Panc1 (cell line): ENCODE measurements at regions of chr10 and their contacts with region 1.

Region 1: DNA sequence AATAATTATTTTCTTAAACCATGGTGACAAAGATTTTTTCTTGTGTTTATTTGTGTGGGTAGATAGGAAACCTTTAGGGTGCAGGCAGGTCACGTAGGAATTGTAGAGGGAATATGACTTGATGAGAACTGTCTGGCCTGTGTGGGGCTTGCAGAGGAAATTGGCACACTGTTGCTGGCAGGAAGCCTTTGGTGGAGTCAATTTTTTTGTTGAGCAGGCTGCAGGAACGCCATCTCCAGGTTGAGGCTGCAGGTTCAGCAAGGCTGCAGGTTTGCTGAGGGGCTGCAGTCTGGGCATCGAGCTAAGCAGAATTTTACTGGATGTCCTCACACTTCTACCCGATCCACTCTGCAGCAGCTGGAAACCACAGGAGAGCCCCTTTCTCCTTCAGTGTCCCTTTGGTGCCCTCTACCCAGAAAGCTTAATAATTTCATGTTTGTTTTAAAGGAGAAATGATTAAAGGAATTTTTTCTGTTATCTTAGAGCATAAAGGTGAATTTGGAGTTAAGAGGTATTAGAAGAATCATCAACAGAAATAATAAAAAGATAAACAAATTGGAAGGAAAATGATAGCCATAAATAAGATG is 37.0 kb downstream of the TBC1D12 start:
- DNase-seq: no peak
- ATAC-seq: peak; percentile 79
- H3K4me3 ChIP-seq: no peak overlapping the region
- H3K27ac ChIP-seq: 0 out of 2 replicates have a peak overlapping the region, but pooled peaks have one; percentile 10
- H3K4me1 ChIP-seq: peaks cover 20% of the 10 kb centered on the region
- H3K27me3 ChIP-seq: no peaks in the 10 kb centered on the region
- CTCF ChIP-seq: peak; percentile 28; the same call in 1 of the 2 replicates

Region 2: GRCh38 chr10:94344522-94345122 is 94.7 kb before region 1 on chr10:
- CTCF ChIA-PET with region 1: interaction called, 3 read pairs
- POLR2A ChIA-PET with region 1: no interaction called
- in situ Hi-C with region 1: no loop called
- intact Hi-C with region 1: loop called (anchors 5 kb)
- DNase-seq: no peak
- ATAC-seq: no peak
- H3K4me3 ChIP-seq: no peak overlapping the region
- H3K27ac ChIP-seq: no peak overlapping the region
- H3K4me1 ChIP-seq: no peaks in the 10 kb centered on the region
- H3K27me3 ChIP-seq: no peaks in the 10 kb centered on the region
- CTCF ChIP-seq: no peak

Region 3: DNA sequence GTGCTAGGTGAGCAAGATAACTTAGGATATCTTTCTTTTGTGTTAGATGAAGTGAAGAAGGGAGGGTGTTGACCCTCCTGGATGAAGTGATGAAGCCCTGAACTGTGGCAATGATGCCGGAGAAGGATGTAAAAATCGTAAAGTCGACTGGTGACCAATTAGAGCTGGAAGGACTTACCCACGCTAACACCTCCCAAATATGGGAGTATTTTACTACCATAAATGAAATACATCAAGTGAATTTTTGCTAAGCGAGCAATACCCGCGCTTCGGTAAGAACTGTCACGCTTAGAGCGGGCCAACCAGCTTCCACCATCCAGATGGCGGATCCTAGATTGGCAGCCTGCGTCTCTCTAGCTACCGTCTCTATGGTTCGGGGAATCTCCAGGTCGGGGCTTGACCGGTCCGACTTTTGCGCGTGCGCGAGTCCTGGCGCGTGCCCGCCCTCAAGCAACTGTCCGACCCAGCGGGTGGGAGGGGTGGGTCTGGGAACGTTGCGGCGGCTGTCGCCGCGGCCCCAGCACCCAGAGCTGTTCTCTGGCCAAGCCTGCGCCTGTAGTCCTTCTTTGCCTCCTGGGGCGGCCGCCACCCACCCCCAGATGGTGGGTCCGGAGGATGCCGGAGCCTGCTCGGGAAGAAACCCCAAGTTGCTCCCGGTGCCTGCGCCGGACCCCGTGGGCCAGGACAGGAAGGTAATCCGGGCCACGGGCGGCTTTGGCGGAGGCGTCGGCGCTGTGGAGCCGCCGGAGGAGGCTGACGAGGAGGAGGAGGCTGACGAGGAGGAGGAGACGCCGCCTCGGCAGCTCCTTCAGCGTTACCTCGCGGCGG is 37.1 kb before region 1 on chr10 and contains the start of gene TBC1D12:
- CTCF ChIA-PET with region 1: interaction called, 12 read pairs
- POLR2A ChIA-PET with region 1: interaction called, 12 read pairs
- in situ Hi-C with region 1: no loop called
- intact Hi-C with region 1: loop called (anchors 5 kb)
- DNase-seq: peak; percentile 92
- ATAC-seq: peak; percentile 89
- H3K4me3 ChIP-seq: peak within 1 kb of the TSS; percentile 71 to 79
- H3K27ac ChIP-seq: peak within 1 kb of the TSS; percentile 92
- H3K4me1 ChIP-seq: peaks cover 30% of the 10 kb centered on the region
- H3K27me3 ChIP-seq: no peaks in the 10 kb centered on the region
- CTCF ChIP-seq: no peak
- total RNA-seq, gene TBC1D12: 23.7 TPM

Region 4: GRCh38 chr10:94423627-94424026 is 15.7 kb before region 1 on chr10:
- CTCF ChIA-PET with region 1: interaction called, 3 read pairs
- POLR2A ChIA-PET with region 1: interaction called, 4 read pairs
- in situ Hi-C with region 1: no loop called
- intact Hi-C with region 1: loop called (anchors 1 kb)
- DNase-seq: no peak
- ATAC-seq: no peak
- H3K4me3 ChIP-seq: no peak overlapping the region
- H3K27ac ChIP-seq: no peak overlapping the region
- H3K4me1 ChIP-seq: no peaks in the 10 kb centered on the region; the same call in 1 of the 2 replicates
- H3K27me3 ChIP-seq: no peaks in the 10 kb centered on the region
- CTCF ChIP-seq: no peak